CD8-positive, alpha-beta T cell (primary cell): ENCODE measurements at regions of chr13 and their contacts with region 1.

Region 1: GRCh38 chr13:77176350-77176749 is 149.4 kb upstream of the FBXL3 start:
- DNase-seq: no peak
- ATAC-seq: no peak
- H3K4me3 ChIP-seq: no peak overlapping the region
- H3K4me3 Mint-ChIP-seq: no peak overlapping the region
- H3K27ac ChIP-seq: no peak overlapping the region
- H3K27ac Mint-ChIP-seq: no peak overlapping the region
- H3K4me1 ChIP-seq: no peaks in the 10 kb centered on the region
- H3K4me1 Mint-ChIP-seq: peaks cover 2% of the 10 kb centered on the region
- H3K27me3 ChIP-seq: no peaks in the 10 kb centered on the region
- H3K27me3 Mint-ChIP-seq: no peaks in the 10 kb centered on the region
- CTCF ChIP-seq: no peak

Region 2: GRCh38 chr13:77065461-77066147 is 110.7 kb before region 1 on chr13:
- CTCF ChIA-PET with region 1: no interaction called
- POLR2A ChIA-PET with region 1: no interaction called
- intact Hi-C with region 1: loop called (anchors 5 to 10 kb)
- DNase-seq: no peak
- ATAC-seq: no peak
- H3K4me3 ChIP-seq: no peak overlapping the region
- H3K4me3 Mint-ChIP-seq: no peak overlapping the region
- H3K27ac ChIP-seq: no peak overlapping the region
- H3K27ac Mint-ChIP-seq: peak overlapping the region; percentile 52
- H3K4me1 ChIP-seq: no peaks in the 10 kb centered on the region
- H3K4me1 Mint-ChIP-seq: no peaks in the 10 kb centered on the region
- H3K27me3 ChIP-seq: no peaks in the 10 kb centered on the region
- H3K27me3 Mint-ChIP-seq: no peaks in the 10 kb centered on the region
- CTCF ChIP-seq: no peak

Region 3: DNA sequence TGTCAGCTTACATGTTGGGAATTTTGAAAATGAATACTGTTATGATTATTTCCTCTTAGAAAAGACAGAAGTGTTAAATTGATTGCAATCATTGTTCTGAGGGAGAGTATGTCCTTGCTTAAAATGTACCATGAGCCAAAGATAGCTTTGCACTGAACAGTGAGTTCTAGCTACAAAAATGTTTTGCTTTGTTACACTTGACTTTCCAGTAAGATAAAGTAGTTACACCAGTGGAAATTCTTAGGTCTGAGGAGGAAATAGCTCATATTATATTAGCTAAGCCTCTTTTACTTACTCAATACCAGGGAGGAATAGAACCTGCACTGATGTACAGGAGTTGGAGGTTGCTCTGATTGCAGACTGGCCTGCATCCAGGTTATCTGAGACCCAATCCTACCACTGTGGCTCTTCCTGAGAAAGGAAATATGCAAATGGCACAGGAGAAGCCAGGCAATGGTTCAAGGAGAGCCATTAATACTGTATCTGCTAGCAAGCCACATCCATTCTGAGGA is 96.4 kb before region 1 on chr13:
- CTCF ChIA-PET with region 1: no interaction called
- POLR2A ChIA-PET with region 1: no interaction called
- intact Hi-C with region 1: loop called (anchors 5 to 10 kb)
- DNase-seq: no peak
- ATAC-seq: no peak
- H3K4me3 ChIP-seq: no peak overlapping the region
- H3K4me3 Mint-ChIP-seq: no peak overlapping the region
- H3K27ac ChIP-seq: no peak overlapping the region
- H3K27ac Mint-ChIP-seq: no peak overlapping the region
- H3K4me1 ChIP-seq: no peaks in the 10 kb centered on the region
- H3K4me1 Mint-ChIP-seq: peaks cover 5% of the 10 kb centered on the region
- H3K27me3 ChIP-seq: no peaks in the 10 kb centered on the region
- H3K27me3 Mint-ChIP-seq: no peaks in the 10 kb centered on the region
- CTCF ChIP-seq: no peak

Region 4: GRCh38 chr13:77190349-77190958 is 14.1 kb after region 1 on chr13:
- CTCF ChIA-PET with region 1: no interaction called
- POLR2A ChIA-PET with region 1: no interaction called
- intact Hi-C with region 1: no loop called
- DNase-seq: no peak
- ATAC-seq: no peak
- H3K4me3 ChIP-seq: no peak overlapping the region
- H3K4me3 Mint-ChIP-seq: no peak overlapping the region
- H3K27ac ChIP-seq: no peak overlapping the region
- H3K27ac Mint-ChIP-seq: no peak overlapping the region
- H3K4me1 ChIP-seq: no peaks in the 10 kb centered on the region
- H3K4me1 Mint-ChIP-seq: peaks cover 9% of the 10 kb centered on the region
- H3K27me3 ChIP-seq: no peaks in the 10 kb centered on the region
- H3K27me3 Mint-ChIP-seq: no peaks in the 10 kb centered on the region
- CTCF ChIP-seq: no peak

Region 5: DNA sequence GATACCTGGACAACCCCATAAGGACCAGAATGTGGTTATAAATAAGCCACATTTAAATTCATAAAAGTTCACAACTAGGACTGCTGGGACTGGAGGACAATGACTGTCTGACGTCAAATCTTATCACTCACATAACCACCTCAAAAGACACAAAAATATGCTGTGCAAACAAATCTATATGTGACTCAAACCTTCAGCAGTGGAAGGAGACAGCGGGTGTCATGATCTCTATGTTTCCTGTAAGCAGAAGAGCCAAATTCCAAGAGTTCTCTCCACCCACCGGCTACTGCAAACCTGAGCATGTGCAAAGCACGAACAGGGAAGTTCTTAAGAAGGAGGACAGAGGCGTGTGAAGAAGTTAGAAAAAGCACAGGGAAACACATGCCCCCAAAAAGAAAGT is 37.3 kb after region 1 on chr13:
- CTCF ChIA-PET with region 1: no interaction called
- POLR2A ChIA-PET with region 1: no interaction called
- intact Hi-C with region 1: loop called in 1 of 2 experiments (anchors 5 kb)
- DNase-seq: no peak
- ATAC-seq: no peak
- H3K4me3 ChIP-seq: no peak overlapping the region
- H3K4me3 Mint-ChIP-seq: no peak overlapping the region
- H3K27ac ChIP-seq: no peak overlapping the region
- H3K27ac Mint-ChIP-seq: no peak overlapping the region
- H3K4me1 ChIP-seq: peaks cover under 1% of the 10 kb centered on the region
- H3K4me1 Mint-ChIP-seq: peaks cover 10% of the 10 kb centered on the region
- H3K27me3 ChIP-seq: no peaks in the 10 kb centered on the region
- H3K27me3 Mint-ChIP-seq: no peaks in the 10 kb centered on the region
- CTCF ChIP-seq: no peak